GM10248 (cell line): ENCODE measurements at regions of chr7 and their contacts with region 1.

Region 1: GRCh38 chr7:129644634-129645230 is 33.2 kb downstream of the NRF1 start:
- DNase-seq: no peak
- CTCF ChIP-seq: peak; percentile 23

Region 2: DNA sequence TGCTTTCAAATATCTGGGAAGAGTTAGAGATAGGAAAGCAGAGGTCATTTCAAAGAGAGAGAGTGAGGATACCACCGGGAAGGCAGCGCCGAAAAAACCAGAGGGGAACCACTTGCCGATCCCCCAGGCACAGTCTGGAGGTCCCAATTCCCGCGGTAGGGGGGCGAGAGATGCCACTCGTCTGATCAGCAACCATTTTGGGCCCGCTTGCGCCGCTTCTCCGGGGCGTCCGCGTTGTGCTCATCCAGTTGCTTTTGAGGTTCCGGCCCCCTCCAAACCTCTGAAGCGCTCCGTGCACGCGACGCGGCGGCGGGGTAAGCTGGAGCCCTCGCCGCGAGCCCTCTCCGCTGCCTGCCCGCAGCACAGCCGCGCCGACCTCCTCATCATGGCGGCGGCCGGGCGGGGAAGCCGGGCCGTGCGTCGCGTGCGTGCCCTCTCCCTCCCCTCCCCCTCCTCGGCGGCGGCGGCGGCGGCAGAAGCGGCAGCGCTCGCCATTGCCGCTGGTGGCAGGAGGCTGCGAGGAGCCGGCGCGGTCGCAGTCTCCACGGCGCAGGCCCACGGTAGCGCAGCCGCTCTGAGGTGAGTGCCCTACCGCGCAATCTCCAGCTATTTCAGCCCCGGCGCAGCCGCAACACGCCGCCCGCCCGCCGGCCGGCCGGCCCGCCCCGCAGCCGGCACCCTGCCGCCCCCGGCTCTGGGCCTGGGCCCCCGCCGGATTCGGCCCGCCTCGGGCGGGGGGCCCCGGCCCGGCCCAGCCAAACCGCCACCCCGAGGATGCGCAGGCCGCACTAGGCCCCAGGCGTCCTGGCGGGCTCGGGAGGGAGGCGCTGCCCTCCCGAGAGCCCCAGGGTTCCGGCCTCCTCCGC is 33.3 kb before region 1 on chr7 and contains the start of gene NRF1:
- CTCF ChIA-PET with region 1: interaction called, 31 read pairs
- POLR2A ChIA-PET with region 1: no interaction called
- DNase-seq: peak; percentile 88
- CTCF ChIP-seq: no peak

Region 3: GRCh38 chr7:129617652-129618051 is 27.1 kb before region 1 on chr7:
- CTCF ChIA-PET with region 1: interaction called, 31 read pairs
- POLR2A ChIA-PET with region 1: no interaction called
- DNase-seq: no peak
- CTCF ChIP-seq: no peak

Region 4: DNA sequence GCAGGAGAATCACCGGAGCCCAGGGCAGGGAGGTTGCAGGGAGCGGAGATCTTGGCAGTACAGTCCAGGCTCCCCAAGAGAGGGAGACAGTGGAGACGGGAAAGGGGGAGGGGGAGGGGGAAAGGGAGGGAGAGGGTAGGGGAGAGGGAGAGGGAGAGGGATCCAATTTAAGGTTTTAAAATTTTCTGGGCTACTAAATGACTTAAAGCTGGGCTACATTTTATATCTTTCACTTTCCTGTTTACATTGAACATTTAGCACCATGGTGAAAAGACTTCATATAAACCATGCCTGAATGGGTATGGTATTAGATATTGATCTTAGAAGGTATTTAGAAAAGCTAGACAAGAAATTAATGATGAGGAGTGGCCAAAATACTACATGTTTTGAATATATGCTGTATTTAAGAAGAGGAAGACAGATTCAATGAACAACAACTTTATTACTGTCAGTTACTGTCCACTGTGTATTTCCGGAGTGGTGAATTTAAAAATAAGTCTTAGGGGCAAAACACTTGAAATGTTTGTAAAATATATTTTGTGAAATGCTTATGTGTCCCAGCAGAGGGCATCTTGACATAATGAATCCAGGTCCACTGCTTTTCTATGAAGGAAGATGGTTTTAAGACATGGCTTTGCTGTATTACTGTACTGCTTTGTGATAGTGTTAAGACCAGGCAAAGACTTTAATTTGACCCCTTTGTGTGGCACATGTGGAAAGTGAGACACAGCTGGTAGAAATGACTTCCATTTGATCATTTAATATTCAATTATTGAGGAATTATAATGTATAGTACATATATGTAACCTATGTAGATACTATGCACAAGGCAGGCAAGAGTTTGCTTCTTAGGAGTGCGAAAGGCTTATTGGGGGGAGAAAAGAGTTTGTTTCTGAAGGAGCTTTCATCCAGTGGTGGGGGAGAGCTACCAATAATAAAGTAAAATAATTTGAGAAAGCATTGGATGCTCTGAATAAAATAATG is 19.6 kb after region 1 on chr7:
- CTCF ChIA-PET with region 1: interaction called, 12 read pairs
- POLR2A ChIA-PET with region 1: no interaction called
- DNase-seq: peak; percentile 50
- CTCF ChIP-seq: peak; percentile 46

Region 5: GRCh38 chr7:129825496-129826267 is 180.9 kb after region 1 on chr7:
- CTCF ChIA-PET with region 1: interaction called, 10 read pairs
- POLR2A ChIA-PET with region 1: no interaction called
- DNase-seq: peak; percentile 91
- CTCF ChIP-seq: peak; percentile 66